Activated CD8-positive, alpha-beta T cell treated with anti-CD3 and anti-CD28 coated beads for 36 hours (primary cell): ENCODE measurements at regions of chr2 and their contacts with region 1.

Region 1: GRCh38 chr2:30165050-30165520 is 18.3 kb downstream of the YPEL5 start:
- DNase-seq: peak; percentile 80
- ATAC-seq: peak; percentile 100
- H3K4me3 Mint-ChIP-seq: no peak overlapping the region
- H3K27ac Mint-ChIP-seq: no peak overlapping the region
- H3K4me1 Mint-ChIP-seq: peaks cover 21% of the 10 kb centered on the region
- H3K27me3 Mint-ChIP-seq: no peaks in the 10 kb centered on the region
- CTCF ChIP-seq: peak; percentile 82

Region 2: DNA sequence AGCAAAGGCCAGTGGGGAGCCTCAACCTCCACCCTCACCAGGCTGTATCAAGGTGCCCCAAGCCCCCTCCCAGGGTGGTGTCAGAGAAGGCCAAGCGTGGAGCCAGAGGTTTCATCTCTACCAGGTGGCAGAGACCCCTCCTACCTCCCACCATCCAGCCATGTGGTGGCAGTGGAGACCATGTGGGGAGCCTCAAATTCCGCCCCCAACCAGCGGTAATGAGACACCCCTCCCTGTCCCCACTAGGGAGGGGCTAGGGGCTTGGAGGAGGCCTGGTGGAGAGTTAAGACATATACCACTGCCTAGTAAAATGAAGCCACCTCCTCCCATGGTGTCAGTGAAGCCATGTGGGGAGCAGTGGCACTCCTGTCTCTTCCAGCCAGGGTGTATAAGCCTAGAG is 42.7 kb before region 1 on chr2:
- CTCF ChIA-PET with region 1: no interaction called
- POLR2A ChIA-PET with region 1: no interaction called
- intact Hi-C with region 1: no loop called
- DNase-seq: no peak
- ATAC-seq: no peak
- H3K4me3 Mint-ChIP-seq: no peak overlapping the region
- H3K27ac Mint-ChIP-seq: no peak overlapping the region
- H3K4me1 Mint-ChIP-seq: peaks cover 8% of the 10 kb centered on the region
- H3K27me3 Mint-ChIP-seq: peaks cover 2% of the 10 kb centered on the region
- CTCF ChIP-seq: no peak

Region 3: DNA sequence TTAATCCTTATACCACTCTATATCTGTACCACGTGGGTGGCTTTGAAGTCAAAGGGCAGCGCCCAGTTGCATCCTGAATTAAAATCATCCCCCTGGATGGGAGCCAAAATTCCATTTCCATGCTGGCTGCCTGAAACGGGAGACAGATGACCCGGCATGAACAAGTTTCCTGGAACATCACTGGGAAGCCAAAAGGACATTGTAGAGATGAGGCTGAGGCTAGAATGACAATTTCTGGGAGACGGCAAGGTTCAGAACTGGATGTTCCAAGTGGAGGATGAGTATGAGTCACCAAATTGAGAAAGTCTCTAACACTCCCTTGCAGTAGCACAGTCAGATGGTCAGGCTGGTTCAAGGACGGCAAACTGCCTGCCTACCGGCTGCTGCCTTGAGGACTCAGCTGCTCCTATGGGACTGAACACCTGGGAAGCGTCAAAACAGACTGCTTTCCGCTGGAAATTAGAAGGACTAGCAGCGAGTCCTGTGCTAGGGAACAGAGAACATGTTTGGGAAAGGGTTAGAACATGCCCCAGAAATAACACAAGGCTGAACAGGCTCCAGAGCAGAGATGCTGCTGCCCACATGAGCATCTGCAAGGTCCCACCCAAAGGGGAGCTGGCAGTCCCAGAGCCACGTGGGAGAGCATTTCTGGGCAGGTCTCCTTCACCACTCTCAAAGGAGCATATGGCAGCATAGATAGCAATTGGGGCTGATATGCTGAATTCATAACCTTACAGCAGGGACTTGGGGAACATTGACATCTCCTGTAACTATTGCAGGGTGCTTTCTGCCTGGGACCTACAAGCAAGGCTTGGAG is 13.7 kb after region 1 on chr2:
- CTCF ChIA-PET with region 1: interaction called, 16 read pairs
- POLR2A ChIA-PET with region 1: no interaction called
- intact Hi-C with region 1: no loop called
- DNase-seq: no peak
- ATAC-seq: no peak
- H3K4me3 Mint-ChIP-seq: no peak overlapping the region
- H3K27ac Mint-ChIP-seq: no peak overlapping the region
- H3K4me1 Mint-ChIP-seq: no peaks in the 10 kb centered on the region
- H3K27me3 Mint-ChIP-seq: no peaks in the 10 kb centered on the region
- CTCF ChIP-seq: no peak

Region 4: GRCh38 chr2:30217644-30218337 is 52.7 kb after region 1 on chr2:
- CTCF ChIA-PET with region 1: interaction called, 13 read pairs
- POLR2A ChIA-PET with region 1: interaction called, 4 read pairs
- intact Hi-C with region 1: no loop called
- DNase-seq: no peak
- ATAC-seq: no peak
- H3K4me3 Mint-ChIP-seq: no peak overlapping the region
- H3K27ac Mint-ChIP-seq: no peak overlapping the region
- H3K4me1 Mint-ChIP-seq: peaks cover 19% of the 10 kb centered on the region
- H3K27me3 Mint-ChIP-seq: no peaks in the 10 kb centered on the region
- CTCF ChIP-seq: no peak

Region 5: DNA sequence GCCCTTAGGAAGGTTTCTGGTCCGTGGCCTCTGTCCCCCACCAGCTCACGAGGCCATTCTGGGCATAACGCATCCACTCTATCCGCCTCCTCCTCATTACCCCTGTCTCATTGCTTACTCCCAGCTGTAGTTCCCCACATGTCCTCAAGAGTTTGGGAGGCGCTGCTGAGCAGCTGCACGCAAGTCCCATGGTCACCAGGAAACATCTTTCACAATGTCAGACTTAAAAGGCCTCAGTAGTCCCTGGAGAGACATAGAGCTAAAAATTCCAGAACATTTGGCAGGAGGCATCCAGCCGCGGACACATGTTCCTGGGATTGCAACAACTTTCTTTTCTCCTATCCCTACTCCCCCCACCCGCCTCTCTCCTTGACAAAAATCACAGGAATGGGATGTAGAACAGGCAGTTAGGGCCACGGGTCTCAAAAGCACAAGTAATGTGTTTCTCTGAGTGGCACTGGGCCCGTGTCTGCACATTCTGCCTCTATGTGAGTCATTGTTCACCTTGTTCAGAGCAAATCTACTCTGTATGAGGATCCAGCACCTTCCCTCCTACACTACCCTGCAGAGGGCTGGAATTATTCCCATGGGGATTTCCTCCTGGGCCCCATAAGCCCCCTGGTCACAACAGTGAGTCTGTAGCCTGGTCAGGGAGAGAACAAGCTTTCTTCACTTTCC is 74.4 kb after region 1 on chr2:
- CTCF ChIA-PET with region 1: interaction called, 56 read pairs
- POLR2A ChIA-PET with region 1: no interaction called
- intact Hi-C with region 1: no loop called
- DNase-seq: peak; percentile 88
- ATAC-seq: peak; percentile 69
- H3K4me3 Mint-ChIP-seq: peak overlapping the region; percentile 78
- H3K27ac Mint-ChIP-seq: peak overlapping the region; percentile 97
- H3K4me1 Mint-ChIP-seq: peaks cover 89% of the 10 kb centered on the region
- H3K27me3 Mint-ChIP-seq: no peaks in the 10 kb centered on the region
- CTCF ChIP-seq: peak; percentile 93

Region 6: GRCh38 chr2:30421604-30422443 is 256.7 kb after region 1 on chr2:
- CTCF ChIA-PET with region 1: interaction called, 13 read pairs
- POLR2A ChIA-PET with region 1: no interaction called
- intact Hi-C with region 1: no loop called
- DNase-seq: peak; percentile 65
- ATAC-seq: peak; percentile 49
- H3K4me3 Mint-ChIP-seq: peak overlapping the region; percentile 70
- H3K27ac Mint-ChIP-seq: peak overlapping the region; percentile 96
- H3K4me1 Mint-ChIP-seq: peaks cover 36% of the 10 kb centered on the region
- H3K27me3 Mint-ChIP-seq: no peaks in the 10 kb centered on the region
- CTCF ChIP-seq: no peak

Region 7: GRCh38 chr2:30591186-30591585 is 426.1 kb after region 1 on chr2:
- CTCF ChIA-PET with region 1: interaction called, 12 read pairs
- POLR2A ChIA-PET with region 1: no interaction called
- intact Hi-C with region 1: no loop called
- DNase-seq: no peak
- ATAC-seq: no peak
- H3K4me3 Mint-ChIP-seq: no peak overlapping the region
- H3K27ac Mint-ChIP-seq: no peak overlapping the region
- H3K4me1 Mint-ChIP-seq: peaks cover 5% of the 10 kb centered on the region
- H3K27me3 Mint-ChIP-seq: no peaks in the 10 kb centered on the region
- CTCF ChIP-seq: no peak